Mammary epithelial cell (primary cell): ENCODE measurements at regions of chr19 and their contacts with region 1.

Region 1: DNA sequence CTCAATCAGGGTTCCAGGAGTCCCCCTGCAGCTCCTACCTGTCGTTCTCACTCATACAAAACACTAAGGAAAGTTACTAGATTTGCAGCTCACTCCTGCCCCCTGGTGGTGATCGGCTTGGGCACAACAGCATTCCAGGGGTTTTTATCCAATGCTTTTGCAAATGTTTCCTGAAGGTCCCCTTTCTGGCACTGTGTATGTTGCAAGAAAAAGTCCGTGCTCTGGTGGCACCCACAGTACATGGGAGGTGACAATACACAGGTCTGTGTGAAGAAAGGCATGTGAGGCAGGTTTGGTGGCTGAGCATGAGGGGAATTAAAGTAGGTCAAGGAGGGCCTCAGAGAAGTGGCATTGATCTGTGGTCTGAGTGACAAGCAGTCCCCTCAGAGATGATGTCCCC is 8.6 kb upstream of the TYK2 start:
- DNase-seq: peak; percentile 55
- H3K4me3 ChIP-seq: no peak overlapping the region
- H3K27ac ChIP-seq: no peak overlapping the region
- H3K4me1 ChIP-seq: no peaks in the 10 kb centered on the region
- H3K27me3 ChIP-seq: no peaks in the 10 kb centered on the region
- CTCF ChIP-seq: peak; percentile 92 to 95

Region 2: DNA sequence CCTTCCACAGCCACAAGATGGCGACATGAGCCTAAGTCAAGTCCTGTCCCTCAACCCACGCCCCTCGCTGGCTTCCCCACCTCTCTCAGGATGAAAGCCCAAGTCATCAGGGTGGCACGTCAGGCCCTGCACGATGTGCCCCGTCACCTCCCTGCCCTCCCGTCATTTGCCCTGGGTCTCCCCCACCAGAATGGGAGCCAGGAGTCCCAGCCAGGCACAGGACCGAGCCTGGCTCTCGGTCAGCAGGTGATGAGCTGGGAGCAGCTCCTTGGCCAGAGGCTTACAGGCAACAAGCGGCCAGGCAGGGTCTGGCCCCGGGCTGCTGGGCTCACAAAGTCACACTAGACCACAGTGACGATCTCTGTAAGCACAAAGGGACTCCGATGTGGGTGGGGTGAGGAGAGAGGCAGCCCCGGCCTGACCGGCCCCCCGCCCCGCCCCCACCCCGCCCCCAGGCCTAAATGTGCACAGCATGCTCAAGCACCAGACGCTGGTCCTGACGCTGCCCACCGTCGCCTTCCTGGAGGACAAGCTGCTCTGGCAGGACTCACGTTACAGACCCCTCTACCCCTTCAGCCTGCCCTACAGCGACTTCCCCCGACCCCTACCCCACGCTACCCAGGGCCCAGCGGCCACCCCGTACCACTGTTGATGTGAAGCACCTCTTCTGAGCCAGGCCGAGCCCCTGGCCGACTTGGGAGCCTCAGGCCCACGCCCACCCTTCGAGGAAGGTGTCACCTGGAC is 129.6 kb before region 1 on chr19:
- CTCF ChIA-PET with region 1: interaction called, 3 read pairs
- dilution Hi-C with region 1: no loop called
- in situ Hi-C with region 1: no loop called
- intact Hi-C with region 1: loop called (anchors 1 kb)
- DNase-seq: peak; percentile 76
- H3K4me3 ChIP-seq: peak overlapping the region in 1 of 3 experiments; percentile 17
- H3K27ac ChIP-seq: peak overlapping the region; percentile 45
- H3K4me1 ChIP-seq: peaks cover 23% of the 10 kb centered on the region
- H3K27me3 ChIP-seq: no peaks in the 10 kb centered on the region
- CTCF ChIP-seq: peak; percentile 72 to 77

Region 3: DNA sequence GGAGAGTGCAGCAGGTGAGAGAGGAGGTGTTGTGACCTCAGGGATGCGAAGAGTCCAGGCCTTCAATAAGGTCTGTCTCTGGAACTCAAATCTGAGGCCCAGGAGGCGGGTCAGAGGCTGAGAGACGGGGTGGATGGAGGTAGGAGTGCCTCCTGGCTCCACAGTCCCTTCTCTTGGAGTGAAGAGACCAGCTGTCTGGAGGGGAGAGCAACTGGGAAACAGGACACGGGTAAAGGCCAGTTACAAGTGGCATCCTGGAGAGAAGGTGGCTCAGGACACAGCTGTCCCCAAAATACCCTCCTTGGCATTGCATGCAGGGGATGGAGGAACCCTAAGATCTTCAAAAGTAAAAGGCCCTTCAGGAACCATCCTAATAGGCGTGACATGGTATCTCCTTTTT is 50.6 kb after region 1 on chr19:
- CTCF ChIA-PET with region 1: no interaction called
- dilution Hi-C with region 1: no loop called
- in situ Hi-C with region 1: no loop called
- intact Hi-C with region 1: no loop called
- DNase-seq: no peak
- H3K4me3 ChIP-seq: no peak overlapping the region
- H3K27ac ChIP-seq: no peak overlapping the region
- H3K4me1 ChIP-seq: no peaks in the 10 kb centered on the region
- H3K27me3 ChIP-seq: no peaks in the 10 kb centered on the region
- CTCF ChIP-seq: no peak

Region 4: DNA sequence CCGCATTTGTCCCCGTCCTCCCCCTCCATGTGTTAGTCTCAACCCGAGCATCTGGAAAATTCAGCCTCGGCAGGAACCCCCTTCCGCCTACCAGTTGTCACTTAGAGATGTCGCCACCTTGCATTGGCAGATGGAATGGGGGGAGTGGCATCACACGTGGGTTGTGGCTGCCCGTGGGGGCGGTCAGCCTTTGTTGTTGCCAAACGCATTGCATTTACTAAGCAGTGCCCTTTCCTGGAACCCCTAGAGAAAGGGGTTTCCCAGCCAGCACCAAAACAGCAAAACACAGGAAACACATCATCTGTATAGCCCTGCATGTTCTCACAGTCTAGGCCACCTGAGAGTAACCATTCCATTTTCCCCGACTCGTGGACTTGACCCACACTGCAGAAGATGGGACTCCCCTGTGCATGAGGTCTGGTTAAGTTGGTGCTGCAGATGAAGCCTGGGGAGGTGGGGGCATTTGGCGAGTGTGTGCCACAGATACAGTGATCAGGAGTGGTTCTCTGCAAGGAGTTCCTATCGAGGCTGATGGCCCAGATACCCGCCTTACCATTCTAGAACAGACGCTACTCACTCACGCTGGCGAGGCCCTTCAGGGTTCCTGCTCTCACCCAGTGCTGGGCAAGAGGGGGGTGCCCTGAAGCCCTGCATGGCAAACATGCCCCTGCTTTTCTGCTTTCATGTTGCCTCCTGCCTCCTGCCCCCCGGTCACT is 408.7 kb after region 1 on chr19:
- CTCF ChIA-PET with region 1: no interaction called
- dilution Hi-C with region 1: no loop called
- in situ Hi-C with region 1: no loop called
- intact Hi-C with region 1: no loop called
- DNase-seq: no peak
- H3K4me3 ChIP-seq: no peak overlapping the region
- H3K27ac ChIP-seq: no peak overlapping the region
- H3K4me1 ChIP-seq: no peaks in the 10 kb centered on the region
- H3K27me3 ChIP-seq: no peaks in the 10 kb centered on the region
- CTCF ChIP-seq: no peak